Head of caudate nucleus (tissue), 42 donors: ENCODE measurements at regions of chr1 and their contacts with region 1.

Region 1: GRCh38 chr1:33256701-33257399 is 558 bp downstream of the ZNF362 start:
- DNase-seq: peak in 41 of 42 donors; percentile 15 to 76 (median 47)

Region 2: DNA sequence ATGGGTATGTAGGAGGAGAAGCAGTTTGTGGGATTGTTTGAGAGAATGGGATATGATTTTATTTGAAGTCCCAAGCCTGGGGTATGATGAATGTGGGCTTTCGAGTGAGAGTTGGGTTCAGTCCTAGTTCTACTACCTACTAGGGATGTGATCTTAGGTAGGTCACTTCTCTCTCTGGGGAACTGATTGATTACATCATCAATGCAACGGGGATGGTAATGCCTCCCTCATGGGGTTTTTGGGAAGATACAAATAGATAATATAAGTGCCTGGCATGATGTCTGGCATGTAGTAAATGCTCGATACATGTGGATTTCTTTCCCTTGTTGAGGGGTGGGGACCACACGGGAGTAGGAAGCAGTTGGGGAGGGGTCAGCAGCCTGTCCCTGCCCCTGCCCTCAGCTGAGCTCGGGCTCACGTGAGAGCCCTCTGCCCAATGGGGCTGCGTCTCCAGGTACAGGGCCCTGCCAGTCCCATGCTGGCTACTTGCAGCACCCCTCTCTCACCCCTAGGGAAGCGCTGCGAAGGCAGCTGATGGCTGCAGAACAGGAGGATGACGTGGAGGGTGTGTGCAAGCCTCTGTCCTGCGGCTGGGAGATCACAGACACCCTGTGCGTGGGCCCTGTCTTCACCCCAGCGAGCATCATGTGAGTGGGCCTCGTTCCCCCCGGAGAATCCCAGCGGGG is 137.2 kb before region 1 on chr1:
- intact Hi-C with region 1: no loop called
- DNase-seq: no peak

Region 3: GRCh38 chr1:33137800-33138199 is 119.0 kb before region 1 on chr1:
- intact Hi-C with region 1: loop called (anchors 10 kb)
- DNase-seq: peak; percentile 33 to 87 (median 62)

Region 4: DNA sequence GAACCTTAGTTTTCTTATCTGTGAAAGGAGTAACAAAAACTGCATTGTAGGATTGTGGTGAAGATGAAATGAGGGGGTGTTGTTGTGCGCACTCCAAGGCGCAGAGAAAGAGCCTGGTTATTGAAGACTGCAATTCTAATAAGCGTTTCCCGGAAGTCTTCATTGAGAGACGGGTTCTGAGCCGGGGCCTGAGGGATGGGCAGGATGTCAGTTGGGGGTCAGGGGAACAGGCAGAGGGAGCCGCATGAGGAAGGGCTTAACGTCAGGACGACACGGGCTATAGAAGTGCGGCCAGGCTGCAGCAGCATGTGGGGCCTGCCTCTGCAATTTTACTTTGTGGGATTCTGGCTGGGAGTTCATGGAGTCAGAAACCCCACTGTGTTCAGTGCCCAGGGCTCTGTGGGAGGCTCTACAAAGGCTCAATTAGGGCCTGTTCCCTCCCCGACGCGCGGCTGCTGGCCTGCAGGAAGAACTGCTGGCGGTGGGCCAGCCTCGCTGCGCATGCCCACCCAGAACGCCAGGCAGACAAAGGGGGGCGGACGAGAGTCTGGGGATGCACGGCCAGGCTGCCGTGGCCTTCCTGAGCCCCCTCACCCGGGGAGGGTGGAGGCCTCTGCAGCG is 95.7 kb before region 1 on chr1:
- intact Hi-C with region 1: no loop called
- DNase-seq: peak; percentile 67 to 95 (median 85)

Region 5: GRCh38 chr1:33181921-33182341 is 74.9 kb before region 1 on chr1 and contains the start of gene TRIM62:
- intact Hi-C with region 1: loop called (anchors 10 kb)
- DNase-seq: peak; percentile 69 to 94 (median 87)